ENCODE measurements at regions of chr10 and their contacts with region 1.

Region 1: DNA sequence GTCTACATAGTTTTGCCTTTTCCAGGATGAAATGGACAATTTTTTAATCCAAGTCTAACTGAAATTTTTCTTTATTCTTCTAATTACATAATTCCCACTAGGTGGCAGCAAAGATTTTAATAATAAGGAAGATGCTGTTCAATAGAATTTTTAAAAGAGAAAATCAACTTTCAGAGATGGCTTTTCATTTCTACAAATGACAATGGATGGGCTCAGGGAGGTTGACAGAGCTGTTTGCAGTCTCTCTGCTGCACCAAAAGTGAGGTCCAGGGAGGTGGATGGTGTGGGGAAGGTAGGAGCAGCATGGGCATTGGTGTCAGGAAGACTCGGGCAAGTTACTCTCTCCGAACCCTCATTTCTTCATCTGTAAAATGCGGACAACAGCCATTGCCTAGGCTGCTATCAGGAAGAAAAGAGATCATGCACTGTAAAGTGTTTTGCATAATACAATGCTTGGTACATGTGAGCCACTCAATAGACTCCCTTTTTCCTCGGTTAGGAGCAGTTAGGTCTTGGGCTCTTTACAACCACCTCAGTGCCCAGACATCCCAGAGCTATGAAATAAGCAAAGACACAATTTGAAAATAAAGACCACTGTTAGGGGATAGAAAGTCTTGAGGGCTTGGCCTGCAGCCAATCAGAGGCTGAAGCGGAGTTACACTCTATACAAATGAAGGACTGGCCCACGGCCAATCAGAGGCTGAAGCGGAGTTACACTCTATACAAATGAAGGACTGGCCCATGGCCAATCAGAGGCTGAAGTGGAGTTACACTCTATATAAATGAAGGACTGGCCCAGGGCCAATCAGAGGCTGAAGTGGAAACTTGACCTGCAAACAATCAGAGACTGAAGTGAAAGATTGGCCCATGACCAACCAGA is 107.1 kb downstream of the ABLIM1 start:
- DNase-seq: peak in 3 of 4 donors; percentile 66 to 88 (median 82)
- ATAC-seq: peak; percentile 73
- H3K4me3 ChIP-seq: peak overlapping the region in 1 of 2 donors; percentile 3
- H3K27ac ChIP-seq: peak overlapping the region; percentile 28 to 51
- H3K4me1 ChIP-seq: peaks cover 8 to 15% of the 10 kb centered on the region in 2 donors
- H3K27me3 ChIP-seq: no peaks in the 10 kb centered on the region
- CTCF ChIP-seq: peak; percentile 24 to 48

Region 2: GRCh38 chr10:114258274-114258840 is 292.6 kb before region 1 on chr10:
- intact Hi-C with region 1: no loop called
- DNase-seq: no peak
- ATAC-seq: peak; percentile 59
- H3K4me3 ChIP-seq: no peak overlapping the region
- H3K27ac ChIP-seq: peak overlapping the region in 1 of 2 donors; percentile 63
- H3K4me1 ChIP-seq: peaks cover 3 to 8% of the 10 kb centered on the region in 2 donors
- H3K27me3 ChIP-seq: no peaks in the 10 kb centered on the region
- CTCF ChIP-seq: no peak

Region 3: DNA sequence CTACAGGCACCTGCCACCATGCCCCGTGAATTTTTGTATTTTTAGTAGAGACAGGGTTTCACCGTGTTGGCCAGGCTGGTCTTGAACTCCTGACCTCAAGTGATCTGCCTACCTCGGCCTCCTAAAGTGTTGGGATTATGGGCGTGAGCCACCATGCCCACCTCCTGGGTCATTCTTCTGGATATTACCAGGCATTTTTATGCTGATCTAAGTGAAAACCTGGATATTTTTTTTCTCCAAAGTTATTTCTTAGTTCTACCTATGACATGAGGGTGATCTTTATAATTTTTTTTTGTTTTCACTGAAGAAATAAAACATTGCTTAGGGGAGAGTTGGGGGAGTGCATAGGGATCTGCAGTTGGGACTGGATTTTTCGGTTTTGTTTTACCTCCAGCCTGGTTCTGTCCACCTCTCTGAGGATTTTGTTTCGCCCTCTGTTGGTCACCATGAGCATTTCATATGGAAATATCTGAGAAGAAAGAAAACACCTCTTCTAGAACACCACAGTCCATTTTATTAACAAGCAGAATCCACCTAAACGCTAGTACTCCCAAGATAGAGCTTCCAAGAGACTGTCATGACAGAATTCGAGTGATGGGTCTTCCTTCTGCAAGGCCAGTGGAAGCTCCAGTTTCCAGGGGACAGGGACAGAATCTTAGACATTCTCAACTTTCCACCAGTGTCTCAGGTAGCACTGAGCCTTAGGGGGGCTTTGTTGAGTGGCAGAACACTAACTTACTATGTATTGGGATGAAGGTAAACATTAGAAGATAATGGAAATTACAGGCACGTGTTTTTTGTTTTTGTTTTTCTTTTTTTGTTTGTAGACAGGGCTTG is 113.3 kb before region 1 on chr10:
- intact Hi-C with region 1: no loop called
- DNase-seq: peak in 1 of 4 donors; percentile 13
- ATAC-seq: no peak
- H3K4me3 ChIP-seq: no peak overlapping the region
- H3K27ac ChIP-seq: no peak overlapping the region
- H3K4me1 ChIP-seq: no peaks in the 10 kb centered on the region
- H3K27me3 ChIP-seq: no peaks in the 10 kb centered on the region
- CTCF ChIP-seq: peak; percentile 22 to 26

Region 4: DNA sequence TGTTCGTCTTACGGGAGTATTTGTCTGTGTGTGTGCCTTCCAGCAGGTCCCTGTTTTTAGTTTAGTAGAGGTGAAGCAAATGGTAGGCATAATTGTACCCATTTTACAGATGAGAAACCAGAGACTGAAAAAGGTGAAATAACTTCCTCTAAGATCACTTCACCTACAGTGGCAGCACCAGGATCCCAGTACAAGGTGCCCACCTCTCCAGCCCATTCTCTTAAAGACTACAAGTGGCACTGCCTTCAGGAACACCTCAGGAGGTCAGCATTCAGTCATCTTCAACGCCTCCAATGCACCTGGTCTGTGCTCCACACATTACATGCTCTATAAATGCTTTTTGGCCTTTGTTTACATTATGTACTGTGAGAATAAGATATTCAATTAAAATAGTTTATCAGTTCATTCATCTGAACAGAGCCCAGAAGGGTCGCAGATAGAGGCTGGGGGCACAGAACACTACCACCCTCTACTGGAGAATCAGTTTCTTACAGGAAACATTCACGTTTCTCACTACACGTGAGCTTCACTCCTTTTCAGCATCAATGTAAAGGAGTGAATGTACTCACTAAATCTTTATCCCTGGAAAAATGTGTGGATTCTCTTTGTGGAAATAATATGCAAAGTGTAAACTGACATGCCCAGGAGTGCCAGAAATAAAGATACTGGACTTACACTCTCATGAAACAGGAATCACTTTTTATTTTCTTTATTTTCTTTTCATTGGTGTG is 152.5 kb after region 1 on chr10:
- intact Hi-C with region 1: loop called in 1 of 2 experiments (anchors 5 kb)
- DNase-seq: no peak
- ATAC-seq: peak; percentile 82
- H3K4me3 ChIP-seq: no peak overlapping the region
- H3K27ac ChIP-seq: no peak overlapping the region
- H3K4me1 ChIP-seq: no peaks in the 10 kb centered on the region
- H3K27me3 ChIP-seq: no peaks in the 10 kb centered on the region
- CTCF ChIP-seq: peak; percentile 19 to 65

Region 5: GRCh38 chr10:114779803-114780609 is 229.0 kb after region 1 on chr10:
- intact Hi-C with region 1: loop called in 1 of 2 experiments (anchors 10 kb)
- DNase-seq: peak in 2 of 4 donors; percentile 71 to 73
- ATAC-seq: peak; percentile 85
- H3K4me3 ChIP-seq: no peak overlapping the region
- H3K27ac ChIP-seq: no peak overlapping the region
- H3K4me1 ChIP-seq: peaks cover 6 to 12% of the 10 kb centered on the region in 2 donors
- H3K27me3 ChIP-seq: no peaks in the 10 kb centered on the region
- CTCF ChIP-seq: no peak

Measured in left lung (tissue), 14 donors.